Left ventricle myocardium superior (tissue), 1 donor: ENCODE measurements at regions of chr7 and their contacts with region 1.

Region 1: DNA sequence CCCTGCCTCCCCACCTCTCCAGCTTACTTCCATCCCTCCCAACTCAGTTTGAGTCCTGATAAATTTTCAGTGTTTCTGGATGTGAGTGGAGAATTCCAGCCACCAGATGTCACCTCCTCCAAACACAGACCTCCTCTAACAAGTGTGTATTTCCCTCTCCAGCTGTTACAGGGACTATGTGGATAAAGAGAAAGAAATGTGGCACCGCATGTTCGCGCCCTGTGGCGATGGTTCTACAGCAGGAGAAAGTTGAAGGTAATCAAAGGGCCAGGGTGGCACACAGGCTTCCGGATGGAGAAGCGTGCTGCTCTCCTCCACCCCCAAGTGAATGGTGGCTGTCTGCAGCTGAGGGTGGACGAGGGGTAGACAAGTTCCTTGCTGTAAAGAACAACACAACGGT is 14.7 kb downstream of the FKBP6 start:
- DNase-seq: no peak
- ATAC-seq: peak; percentile 83

Region 2: GRCh38 chr7:73451780-73452398 is 109.2 kb after region 1 on chr7:
- intact Hi-C with region 1: loop called (anchors 10 kb)
- DNase-seq: no peak
- ATAC-seq: peak; percentile 71

Region 3: DNA sequence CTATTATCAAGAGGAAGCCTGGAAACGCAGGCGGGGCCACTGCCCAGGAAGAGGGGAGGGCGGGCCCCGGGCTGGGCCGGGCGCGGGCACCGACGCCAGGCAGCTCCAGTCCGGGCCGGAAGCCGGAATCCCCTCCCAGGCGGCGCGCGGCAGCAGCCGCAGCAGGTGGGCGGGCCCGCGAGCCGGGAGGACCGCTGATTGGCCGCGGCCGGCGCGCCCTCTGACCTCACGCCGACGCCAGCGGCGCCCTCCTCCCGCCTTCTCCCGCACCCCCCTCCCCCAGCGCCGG is 214.4 kb after region 1 on chr7:
- intact Hi-C with region 1: no loop called
- DNase-seq: peak; percentile 97
- ATAC-seq: peak; percentile 96